Caco-2 (cell line): ENCODE measurements at regions of chr19 and their contacts with region 1.

Region 1: DNA sequence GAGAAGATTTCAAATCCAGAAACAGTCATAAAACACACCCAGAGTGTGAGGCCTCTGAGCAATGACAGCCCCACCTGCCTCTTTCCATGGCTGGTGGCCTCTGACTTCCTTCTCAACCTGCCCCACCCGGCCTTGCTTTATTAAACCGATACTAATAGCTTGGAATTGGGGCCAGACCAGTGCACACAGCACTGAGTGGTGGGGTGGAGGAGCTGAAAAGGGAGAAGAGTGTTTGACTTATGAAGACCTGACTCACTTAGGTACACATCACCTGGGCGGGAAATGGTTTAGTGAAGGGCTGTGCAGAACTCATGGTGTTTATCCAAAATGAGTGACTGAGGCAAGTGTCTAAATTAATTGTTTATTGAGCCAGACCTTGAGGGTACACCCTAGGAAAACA is 20.7 kb upstream of the CEACAM6 start:
- DNase-seq: peak; percentile 75 to 89
- H3K4me3 ChIP-seq: no peak overlapping the region
- H3K4me3 Mint-ChIP-seq: peak overlapping the region; percentile 42
- H3K27ac Mint-ChIP-seq: peak overlapping the region; percentile 77
- H3K4me1 ChIP-seq: peaks cover 32% of the 10 kb centered on the region
- H3K4me1 Mint-ChIP-seq: peaks cover 27% of the 10 kb centered on the region
- H3K27me3 ChIP-seq: no peaks in the 10 kb centered on the region
- H3K27me3 Mint-ChIP-seq: no peaks in the 10 kb centered on the region
- CTCF ChIP-seq: no peak

Region 2: GRCh38 chr19:41682386-41682785 is 52.2 kb before region 1 on chr19:
- CTCF ChIA-PET with region 1: no interaction called
- POLR2A ChIA-PET with region 1: no interaction called
- intact Hi-C with region 1: no loop called
- DNase-seq: no peak
- H3K4me3 ChIP-seq: no peak overlapping the region
- H3K4me3 Mint-ChIP-seq: no peak overlapping the region
- H3K27ac Mint-ChIP-seq: no peak overlapping the region
- H3K4me1 ChIP-seq: no peaks in the 10 kb centered on the region
- H3K4me1 Mint-ChIP-seq: no peaks in the 10 kb centered on the region
- H3K27me3 ChIP-seq: no peaks in the 10 kb centered on the region; the same call in 1 of the 2 replicates
- H3K27me3 Mint-ChIP-seq: peaks cover 8% of the 10 kb centered on the region
- CTCF ChIP-seq: no peak

Region 3: DNA sequence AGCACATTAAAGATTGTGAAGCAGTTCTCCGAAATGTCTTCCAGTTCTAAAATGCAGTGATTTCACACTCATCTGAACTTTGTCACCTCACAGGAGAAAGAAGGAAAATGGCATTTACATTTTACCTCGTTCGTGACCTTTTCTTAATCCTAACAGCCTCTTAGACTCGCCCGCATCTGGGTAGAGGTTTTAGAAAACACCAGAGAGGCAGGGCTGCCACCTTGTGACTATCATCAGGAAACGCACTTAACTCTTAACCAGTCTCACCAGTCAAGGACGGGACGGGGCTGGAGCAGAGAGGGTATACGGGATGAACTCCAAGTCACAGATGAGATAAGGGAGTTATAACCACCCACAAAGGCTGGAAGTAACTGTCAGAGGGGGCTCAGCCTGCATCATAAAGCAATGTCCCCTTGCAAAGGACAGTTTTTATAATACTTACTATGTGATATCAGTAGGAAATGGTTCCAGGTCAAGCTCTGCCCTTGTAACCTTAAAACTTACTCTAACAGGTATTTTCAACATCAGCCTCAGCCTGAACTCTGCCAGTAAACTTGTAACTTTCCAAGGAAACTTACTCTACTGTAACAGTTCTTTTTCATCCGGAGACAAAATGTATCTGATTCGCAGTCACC is 12.1 kb after region 1 on chr19:
- CTCF ChIA-PET with region 1: no interaction called
- POLR2A ChIA-PET with region 1: no interaction called
- intact Hi-C with region 1: no loop called
- DNase-seq: peak; percentile 73 to 76
- H3K4me3 ChIP-seq: no peak overlapping the region
- H3K4me3 Mint-ChIP-seq: no peak overlapping the region
- H3K27ac Mint-ChIP-seq: no peak overlapping the region
- H3K4me1 ChIP-seq: peaks cover 15% of the 10 kb centered on the region; the same call in 1 of the 2 replicates
- H3K4me1 Mint-ChIP-seq: peaks cover 16% of the 10 kb centered on the region
- H3K27me3 ChIP-seq: no peaks in the 10 kb centered on the region
- H3K27me3 Mint-ChIP-seq: no peaks in the 10 kb centered on the region
- CTCF ChIP-seq: peak; percentile 85 to 90

Region 4: DNA sequence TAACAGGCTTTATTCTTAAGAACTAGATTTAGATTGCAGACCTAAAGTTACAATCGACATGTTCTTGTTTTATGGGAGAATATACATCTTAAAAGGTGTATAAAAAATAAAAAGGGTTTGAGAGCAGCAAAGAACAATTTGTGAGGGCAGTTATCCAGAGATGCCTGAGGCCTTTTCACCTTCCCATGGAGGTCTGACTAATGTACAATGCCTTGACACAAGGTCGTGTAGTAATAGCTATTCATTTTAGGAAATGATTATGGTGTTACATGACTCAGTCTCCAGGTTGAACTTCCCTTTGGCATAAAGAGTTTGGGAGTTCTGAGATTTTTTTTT is 40.7 kb after region 1 on chr19:
- CTCF ChIA-PET with region 1: interaction called, 10 read pairs
- POLR2A ChIA-PET with region 1: no interaction called
- intact Hi-C with region 1: loop called (anchors 1 kb)
- DNase-seq: no peak
- H3K4me3 ChIP-seq: no peak overlapping the region
- H3K4me3 Mint-ChIP-seq: no peak overlapping the region
- H3K27ac Mint-ChIP-seq: peak overlapping the region; percentile 87
- H3K4me1 ChIP-seq: peaks cover 80% of the 10 kb centered on the region
- H3K4me1 Mint-ChIP-seq: peaks cover 49% of the 10 kb centered on the region
- H3K27me3 ChIP-seq: no peaks in the 10 kb centered on the region
- H3K27me3 Mint-ChIP-seq: no peaks in the 10 kb centered on the region
- CTCF ChIP-seq: no peak

Region 5: GRCh38 chr19:41847351-41848105 is 112.9 kb after region 1 on chr19:
- CTCF ChIA-PET with region 1: no interaction called
- POLR2A ChIA-PET with region 1: no interaction called
- intact Hi-C with region 1: no loop called
- DNase-seq: no peak
- H3K4me3 ChIP-seq: no peak overlapping the region
- H3K4me3 Mint-ChIP-seq: no peak overlapping the region
- H3K27ac Mint-ChIP-seq: no peak overlapping the region
- H3K4me1 ChIP-seq: no peaks in the 10 kb centered on the region
- H3K4me1 Mint-ChIP-seq: no peaks in the 10 kb centered on the region
- H3K27me3 ChIP-seq: no peaks in the 10 kb centered on the region
- H3K27me3 Mint-ChIP-seq: peaks cover 26% of the 10 kb centered on the region
- CTCF ChIP-seq: no peak